ENCODE measurements at regions of chr6 and their contacts with region 1.

Region 1: DNA sequence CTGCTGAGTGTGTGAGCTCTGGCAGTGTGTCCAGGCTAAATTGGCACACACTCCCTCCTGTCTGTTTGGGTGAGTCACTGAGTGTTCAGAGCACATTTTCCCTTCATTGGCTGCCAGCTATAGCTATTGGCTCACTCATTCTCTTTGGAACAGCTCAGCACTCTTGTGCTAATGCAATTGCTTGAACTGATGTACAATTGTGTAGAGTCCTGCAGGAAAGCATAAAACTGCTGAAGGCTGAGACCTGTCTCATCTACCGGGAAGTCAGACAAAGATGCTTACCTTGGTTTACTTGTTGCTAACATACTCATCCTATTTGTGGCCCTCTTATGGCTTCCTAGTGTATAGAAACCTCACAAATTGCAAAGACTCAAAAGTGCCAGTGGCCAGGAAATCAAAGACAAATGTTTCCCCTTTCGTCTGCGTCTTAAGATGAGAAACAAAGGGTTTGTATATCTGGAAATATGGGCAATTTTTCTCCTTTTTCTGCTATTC is 351.0 kb downstream of the BCKDHB start:
- DNase-seq: no peak
- H3K4me3 ChIP-seq: no peak overlapping the region
- H3K27ac ChIP-seq: no peak overlapping the region
- H3K4me1 ChIP-seq: peaks cover 21% of the 10 kb centered on the region
- H3K27me3 ChIP-seq: no peaks in the 10 kb centered on the region
- CTCF ChIP-seq: no peak
- POLR2A ChIP-seq: no peak

Region 2: GRCh38 chr6:80480421-80481157 is 23.1 kb after region 1 on chr6:
- intact Hi-C with region 1: loop called (anchors 1 kb)
- DNase-seq: no peak
- H3K4me3 ChIP-seq: no peak overlapping the region
- H3K27ac ChIP-seq: no peak overlapping the region
- H3K4me1 ChIP-seq: no peaks in the 10 kb centered on the region
- H3K27me3 ChIP-seq: no peaks in the 10 kb centered on the region
- CTCF ChIP-seq: no peak
- POLR2A ChIP-seq: no peak